Calu3 (cell line): ENCODE measurements at regions of chr1 and their contacts with region 1.

Region 1: DNA sequence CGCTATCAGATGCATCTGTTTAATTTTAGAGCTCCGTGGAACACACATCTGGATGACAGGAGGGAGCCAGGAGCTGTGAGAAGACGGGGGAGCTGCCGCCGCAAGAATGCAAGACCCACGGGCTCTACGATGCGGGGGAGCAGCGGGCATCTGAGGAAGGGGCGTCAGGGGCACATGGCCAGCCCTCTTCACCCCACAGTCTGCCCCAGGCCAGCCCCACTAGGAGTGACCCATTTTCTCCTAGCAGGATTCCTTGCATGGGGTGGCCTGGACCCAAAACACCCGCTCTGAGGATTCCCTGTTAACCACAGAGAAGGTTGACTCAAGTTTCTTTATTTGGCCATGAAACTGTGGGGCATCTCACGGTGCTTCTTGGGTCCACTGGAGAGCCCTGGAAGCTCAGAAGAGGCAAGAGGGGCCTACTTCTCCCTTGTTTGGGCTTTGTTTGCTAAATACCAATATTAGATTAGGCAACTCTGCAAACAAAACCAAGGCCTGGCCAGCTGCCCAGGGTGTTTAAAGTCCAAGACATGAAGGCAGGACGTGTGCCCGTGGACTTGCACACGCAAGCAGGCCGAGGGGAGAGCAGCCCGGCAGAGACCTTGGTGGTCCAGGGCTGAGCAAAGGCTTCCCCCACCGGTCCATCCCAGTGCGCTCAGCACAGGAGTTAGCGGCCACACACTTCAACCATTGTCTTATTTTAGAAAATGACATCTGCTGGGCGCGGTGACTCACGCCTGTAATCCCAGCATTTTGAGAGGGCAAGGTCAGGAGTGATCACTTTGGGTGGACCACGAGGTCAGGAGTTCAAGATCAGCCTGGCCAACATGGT is 89.8 kb downstream of the DHRS3 start:
- DNase-seq: peak; percentile 77
- H3K4me3 Mint-ChIP-seq: no peak overlapping the region
- H3K27ac Mint-ChIP-seq: peak overlapping the region; percentile 27
- H3K4me1 Mint-ChIP-seq: peaks cover 35% of the 10 kb centered on the region
- H3K27me3 Mint-ChIP-seq: no peaks in the 10 kb centered on the region
- CTCF ChIP-seq: no peak

Region 2: GRCh38 chr1:12486401-12487005 is 41.7 kb before region 1 on chr1:
- CTCF ChIA-PET with region 1: interaction called, 12 read pairs
- intact Hi-C with region 1: loop called (anchors 5 kb)
- DNase-seq: peak; percentile 13
- H3K4me3 Mint-ChIP-seq: no peak overlapping the region
- H3K27ac Mint-ChIP-seq: peak overlapping the region; percentile 47
- H3K4me1 Mint-ChIP-seq: peaks cover 33% of the 10 kb centered on the region
- H3K27me3 Mint-ChIP-seq: no peaks in the 10 kb centered on the region
- CTCF ChIP-seq: no peak

Region 3: DNA sequence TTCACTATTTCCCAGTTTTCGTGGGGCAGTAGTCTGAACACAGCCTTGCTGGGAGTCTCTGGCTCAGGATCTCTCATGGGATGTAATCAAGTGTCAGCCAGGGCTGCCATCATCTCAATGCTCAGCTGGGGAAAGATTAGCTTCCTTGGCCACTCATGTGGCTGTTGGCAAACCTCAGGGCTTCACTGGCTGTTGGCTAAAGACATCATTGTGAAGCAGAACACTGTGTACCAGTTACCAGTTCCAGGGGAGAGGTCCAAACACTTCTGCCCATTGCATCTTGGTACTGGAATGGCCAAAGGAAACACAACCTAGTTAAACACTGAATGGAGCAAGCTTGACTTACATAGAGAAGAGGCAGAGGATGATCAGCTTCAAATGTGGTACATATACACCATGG is 149.3 kb after region 1 on chr1:
- CTCF ChIA-PET with region 1: no interaction called
- intact Hi-C with region 1: no loop called
- DNase-seq: no peak
- H3K4me3 Mint-ChIP-seq: no peak overlapping the region
- H3K27ac Mint-ChIP-seq: no peak overlapping the region
- H3K4me1 Mint-ChIP-seq: no peaks in the 10 kb centered on the region
- H3K27me3 Mint-ChIP-seq: peaks cover 45% of the 10 kb centered on the region
- CTCF ChIP-seq: no peak